ENCODE measurements at regions of chr2 and their contacts with region 1.

Region 1: DNA sequence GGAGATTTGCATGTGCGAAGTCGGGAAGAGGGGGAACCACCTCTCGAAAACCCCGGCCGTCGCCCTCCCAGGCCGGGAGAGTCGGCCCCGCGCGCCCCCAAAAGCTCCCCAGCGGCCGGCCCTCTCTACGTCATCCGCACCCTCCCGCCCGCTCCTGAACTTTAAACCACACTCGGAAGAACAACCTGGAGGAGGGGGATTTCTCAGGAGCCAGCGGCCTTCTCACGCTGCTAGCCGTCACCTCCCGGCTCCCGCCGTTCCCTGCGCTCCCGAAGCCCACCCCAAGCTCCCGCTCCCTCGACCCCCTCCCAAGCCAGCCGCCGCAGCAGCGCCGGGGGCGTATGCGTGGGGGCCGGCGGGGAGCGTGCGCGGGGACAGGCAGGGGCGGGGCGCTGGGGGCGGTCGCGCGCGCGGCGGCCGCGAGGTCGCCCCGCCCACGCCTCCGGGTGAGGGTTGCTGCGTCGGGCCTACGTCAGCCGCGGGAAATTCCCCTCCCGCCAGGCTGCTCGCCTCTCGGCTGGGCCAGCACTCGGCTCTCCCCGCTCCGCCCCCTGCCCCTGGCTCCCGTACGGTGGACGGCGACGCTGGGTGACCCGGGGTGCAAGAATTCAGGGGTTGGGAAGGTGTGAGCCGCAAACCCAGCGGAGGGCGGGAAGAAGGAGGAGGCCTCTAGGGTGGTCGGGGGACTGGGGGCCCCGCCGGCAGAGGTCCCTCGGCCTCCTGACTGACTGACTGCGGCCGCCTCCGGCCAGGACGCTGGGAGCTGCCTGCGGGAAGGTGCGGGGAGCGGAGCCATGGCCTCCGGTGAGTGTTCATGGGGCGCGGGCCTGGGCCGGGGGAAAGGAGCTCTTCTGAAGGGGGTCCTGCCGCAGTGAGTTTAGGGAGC is at the start of gene REL:
- DNase-seq: peak; percentile 97
- ATAC-seq: peak; percentile 97
- H3K4me3 ChIP-seq: peak within 1 kb of the TSS; percentile 92
- H3K27ac ChIP-seq: peak within 1 kb of the TSS; percentile 99
- H3K4me1 ChIP-seq: peaks cover 21% of the 10 kb centered on the region
- H3K27me3 ChIP-seq: no peaks in the 10 kb centered on the region
- CTCF ChIP-seq: no peak
- total RNA-seq, gene REL: 29.1 TPM

Region 2: DNA sequence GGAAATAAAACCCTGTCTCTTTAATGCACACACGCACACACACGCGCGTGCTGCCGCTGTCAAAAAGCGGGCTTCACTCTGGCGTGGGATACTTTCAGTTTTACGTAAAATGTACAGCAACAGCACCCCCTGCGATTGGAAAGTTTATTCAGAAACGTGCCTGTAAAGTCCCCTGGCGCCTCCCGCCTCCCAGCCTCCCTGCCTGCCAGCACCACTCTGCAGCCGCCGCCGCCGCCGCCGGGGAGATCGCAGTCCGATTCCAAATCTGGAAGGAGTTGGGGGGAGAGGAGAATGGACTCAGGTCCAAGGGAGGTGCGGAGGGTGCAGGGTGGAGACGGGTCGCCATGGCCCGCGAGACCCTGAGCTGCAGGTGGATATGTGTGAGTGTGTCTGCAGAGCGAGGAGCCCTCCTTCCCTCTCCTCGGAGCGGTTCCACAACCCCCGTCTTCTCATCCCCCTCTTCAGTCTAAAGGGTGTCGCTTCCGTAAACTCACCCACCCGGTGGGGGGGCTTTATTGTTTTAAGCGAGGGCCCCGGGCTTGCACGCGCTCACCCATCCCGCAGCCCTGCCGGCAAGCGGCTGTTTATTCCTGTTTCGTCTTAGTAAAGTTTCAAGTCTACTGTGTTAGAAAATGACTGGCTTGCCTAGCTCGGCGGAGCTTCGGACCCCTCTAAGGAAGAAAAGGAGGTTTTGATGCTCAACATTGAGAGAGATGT is 326.1 kb before region 1 on chr2:
- intact Hi-C with region 1: loop called (anchors 5 kb)
- DNase-seq: peak; percentile 81
- ATAC-seq: peak; percentile 50
- H3K4me3 ChIP-seq: peak overlapping the region; percentile 66
- H3K27ac ChIP-seq: no peak overlapping the region
- H3K4me1 ChIP-seq: peaks cover 49% of the 10 kb centered on the region
- H3K27me3 ChIP-seq: peaks cover 63% of the 10 kb centered on the region
- CTCF ChIP-seq: peak; percentile 32

Region 3: GRCh38 chr2:60644951-60645350 is 236.3 kb before region 1 on chr2:
- intact Hi-C with region 1: no loop called
- DNase-seq: no peak
- ATAC-seq: no peak
- H3K4me3 ChIP-seq: no peak overlapping the region
- H3K27ac ChIP-seq: no peak overlapping the region
- H3K4me1 ChIP-seq: no peaks in the 10 kb centered on the region
- H3K27me3 ChIP-seq: peaks cover 14% of the 10 kb centered on the region
- CTCF ChIP-seq: no peak

Region 4: DNA sequence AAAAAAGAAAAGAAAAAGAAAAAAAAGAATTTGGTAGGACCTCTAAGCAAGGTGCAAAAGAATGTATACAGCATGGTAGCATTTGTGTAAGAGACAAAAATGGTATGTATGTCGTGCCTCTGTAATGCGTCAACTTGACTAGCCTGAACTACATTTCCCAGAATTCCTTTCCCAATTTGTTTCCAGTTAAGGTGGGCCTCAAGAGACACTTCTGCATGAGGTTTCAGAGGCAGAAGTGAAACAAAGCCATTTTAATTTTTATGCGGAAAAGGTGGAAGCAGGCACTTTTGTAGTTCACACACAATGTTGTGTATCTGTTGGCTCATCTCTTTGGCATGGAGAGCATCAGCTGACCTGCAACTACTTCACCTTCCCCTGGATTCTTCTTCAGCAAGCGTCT is 181.7 kb before region 1 on chr2:
- intact Hi-C with region 1: no loop called
- DNase-seq: no peak
- ATAC-seq: peak; percentile 43
- H3K4me3 ChIP-seq: no peak overlapping the region
- H3K27ac ChIP-seq: no peak overlapping the region
- H3K4me1 ChIP-seq: no peaks in the 10 kb centered on the region
- H3K27me3 ChIP-seq: no peaks in the 10 kb centered on the region
- CTCF ChIP-seq: no peak

Measured in upper lobe of right lung (tissue), 1 donor.